Adrenal gland (tissue), 19 donors: ENCODE measurements at regions of chrX and their contacts with region 1.

Region 1: DNA sequence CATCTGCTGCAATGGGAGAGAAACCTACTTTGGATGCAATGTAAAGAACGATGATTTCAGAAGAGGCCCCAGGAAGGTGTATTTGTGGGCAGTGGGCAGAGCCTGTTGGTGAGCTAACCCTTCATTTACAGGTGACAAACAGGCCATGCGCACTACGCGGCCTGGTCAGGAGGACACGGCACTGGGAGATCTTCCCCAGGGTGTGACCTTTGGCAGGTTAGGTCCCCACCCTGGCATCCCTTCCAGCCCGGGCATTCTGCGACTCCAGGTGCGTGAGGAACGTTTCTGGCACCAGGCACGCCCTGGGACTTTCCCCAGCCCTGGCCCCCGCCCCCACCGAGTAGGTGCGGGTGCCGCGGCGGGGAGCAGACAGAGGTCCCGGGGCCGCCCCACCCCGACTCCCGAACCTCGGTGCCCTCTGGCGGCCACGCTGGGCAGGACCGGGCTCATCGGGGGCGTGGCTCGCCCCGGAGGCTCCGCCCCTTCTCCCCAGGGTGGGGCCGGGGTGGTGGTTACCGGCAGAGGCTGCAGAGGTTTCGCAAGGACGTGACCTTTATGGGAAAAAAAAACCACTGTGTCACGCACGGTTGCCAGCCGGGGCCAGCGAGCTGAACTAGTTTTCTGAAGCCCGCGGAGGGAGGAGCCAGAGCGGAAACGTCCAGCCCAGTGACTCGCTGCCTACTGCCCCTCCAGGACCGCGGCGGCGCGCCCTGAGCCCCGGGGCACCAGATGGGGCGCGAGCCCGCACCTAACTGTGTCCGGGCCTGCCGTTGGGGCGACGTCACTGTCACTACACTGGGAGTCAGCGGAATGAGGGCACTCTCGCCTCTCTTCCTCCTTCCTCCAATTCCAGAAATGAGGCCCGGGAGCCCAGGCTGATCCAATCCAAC is 5.0 kb upstream of the NYX start:
- DNase-seq: peak; percentile 85 to 95 (median 93)
- H3K4me3 ChIP-seq: peak overlapping the region in 1 of 4 donors; percentile 40
- H3K27ac ChIP-seq: peak overlapping the region; percentile 53 to 90 (median 66)
- H3K4me1 ChIP-seq: peaks cover 3 to 4% of the 10 kb centered on the region in 2 donors
- H3K27me3 ChIP-seq: peaks cover 7% of the 10 kb centered on the region
- CTCF ChIP-seq: peak; percentile 29 to 74 (median 58)
- POLR2A ChIP-seq: peak; percentile 51 to 81

Region 2: DNA sequence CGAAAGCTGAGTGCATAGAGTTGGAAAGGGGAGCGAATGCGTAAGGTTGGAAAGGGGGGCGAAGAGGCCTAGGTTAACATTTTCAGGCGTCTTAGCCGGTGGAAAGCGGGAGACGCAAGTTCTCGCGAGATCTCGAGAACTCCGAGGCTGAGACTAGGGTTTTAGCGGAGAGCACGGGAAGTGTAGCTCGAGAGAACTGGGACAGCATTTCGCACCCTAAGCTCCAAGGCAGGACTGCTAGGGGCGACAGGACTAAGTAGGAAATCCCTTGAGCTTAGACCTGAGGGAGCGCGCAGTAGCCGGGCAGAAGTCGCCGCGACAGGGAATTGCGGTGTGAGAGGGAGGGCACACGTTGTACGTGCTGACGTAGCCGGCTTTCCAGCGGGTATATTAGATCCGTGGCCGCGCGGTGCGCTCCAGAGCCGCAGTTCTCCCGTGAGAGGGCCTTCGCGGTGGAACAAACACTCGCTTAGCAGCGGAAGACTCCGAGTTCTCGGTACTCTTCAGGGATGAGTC is 108.4 kb before region 1 on chrX and contains the start of gene DDX3X:
- intact Hi-C with region 1: loop called in 1 of 2 experiments (anchors 10 kb)
- DNase-seq: peak; percentile 84 to 94 (median 91)
- H3K4me3 ChIP-seq: peak within 1 kb of the TSS; percentile 15 to 95 (median 85)
- H3K27ac ChIP-seq: peak within 1 kb of the TSS; percentile 98 to 100 (median 99)
- H3K4me1 ChIP-seq: peaks cover 25 to 42% of the 10 kb centered on the region in 2 donors
- H3K27me3 ChIP-seq: no peaks in the 10 kb centered on the region
- CTCF ChIP-seq: peak in 4 of 6 experiments; percentile 26 to 45 (median 32)
- POLR2A ChIP-seq: peak; percentile 99
- total RNA-seq, gene DDX3X: 178 to 391 (median 213) TPM

Region 3: GRCh38 chrX:41952102-41952501 is 509.9 kb after region 1 on chrX:
- intact Hi-C with region 1: no loop called
- DNase-seq: no peak
- H3K4me3 ChIP-seq: no peak overlapping the region
- H3K27ac ChIP-seq: no peak overlapping the region
- H3K4me1 ChIP-seq: no peaks in the 10 kb centered on the region
- H3K27me3 ChIP-seq: peaks cover 5% of the 10 kb centered on the region
- CTCF ChIP-seq: no peak
- POLR2A ChIP-seq: no peak